Dendritic cell treated with granulocyte-macrophage colony-stimulating factor and Interleukin-4, amounts not matched to agents 40 ng/mL and 50 ng/mL, for 4 days (primary cell): ENCODE measurements at regions of chrX and their contacts with region 1.

Region 1: GRCh38 chrX:9708904-9709553 is 56.6 kb downstream of the GPR143 start:
- H3K4me3 Mint-ChIP-seq: no peak overlapping the region
- H3K27ac Mint-ChIP-seq: no peak overlapping the region
- H3K4me1 Mint-ChIP-seq: peaks cover 13% of the 10 kb centered on the region
- H3K27me3 Mint-ChIP-seq: no peaks in the 10 kb centered on the region

Region 2: GRCh38 chrX:8815464-8816065 is 893.5 kb before region 1 on chrX:
- intact Hi-C with region 1: loop called (anchors 5 kb)
- H3K4me3 Mint-ChIP-seq: no peak overlapping the region
- H3K27ac Mint-ChIP-seq: no peak overlapping the region
- H3K4me1 Mint-ChIP-seq: no peaks in the 10 kb centered on the region
- H3K27me3 Mint-ChIP-seq: peaks cover 6% of the 10 kb centered on the region

Region 3: DNA sequence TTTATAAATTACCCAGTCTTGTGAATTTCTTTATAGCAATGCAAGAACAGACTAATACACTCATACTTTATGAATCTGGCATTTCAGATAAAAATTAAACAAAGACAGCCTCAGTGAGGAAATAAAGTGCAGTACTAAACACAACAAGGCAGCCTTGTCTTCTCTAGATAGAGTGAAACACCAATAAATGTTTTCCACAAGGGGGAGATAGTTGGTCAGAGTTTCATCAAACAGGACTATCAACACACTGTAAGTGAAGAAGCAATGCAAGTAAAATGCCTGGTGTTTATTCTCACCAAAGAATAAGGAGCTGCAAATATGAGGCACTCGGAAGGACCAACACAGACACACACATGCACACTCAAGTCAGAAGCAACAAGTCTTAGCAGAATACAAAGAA is 737.9 kb before region 1 on chrX:
- intact Hi-C with region 1: loop called (anchors 2 kb)
- H3K4me3 Mint-ChIP-seq: no peak overlapping the region
- H3K27ac Mint-ChIP-seq: no peak overlapping the region
- H3K4me1 Mint-ChIP-seq: no peaks in the 10 kb centered on the region
- H3K27me3 Mint-ChIP-seq: peaks cover 16% of the 10 kb centered on the region

Region 4: GRCh38 chrX:9464435-9465371 is 244.3 kb before region 1 on chrX and contains the start of gene TBL1X:
- intact Hi-C with region 1: loop called (anchors 10 kb)
- H3K4me3 Mint-ChIP-seq: peak within 1 kb of the TSS; percentile 76
- H3K27ac Mint-ChIP-seq: peak within 1 kb of the TSS; percentile 73
- H3K4me1 Mint-ChIP-seq: peaks cover 46% of the 10 kb centered on the region
- H3K27me3 Mint-ChIP-seq: no peaks in the 10 kb centered on the region

Region 5: GRCh38 chrX:9635803-9636202 is 73.2 kb before region 1 on chrX:
- intact Hi-C with region 1: no loop called
- H3K4me3 Mint-ChIP-seq: no peak overlapping the region
- H3K27ac Mint-ChIP-seq: no peak overlapping the region
- H3K4me1 Mint-ChIP-seq: no peaks in the 10 kb centered on the region
- H3K27me3 Mint-ChIP-seq: no peaks in the 10 kb centered on the region